PC-3 (cell line): ENCODE measurements at regions of chr10 and their contacts with region 1.

Region 1: GRCh38 chr10:50325449-50326171 is 74.3 kb upstream of the ASAH2 start:
- DNase-seq: peak; percentile 100
- ATAC-seq: peak; percentile 87
- H3K4me3 ChIP-seq: peak overlapping the region; percentile 36
- H3K27ac ChIP-seq: peak overlapping the region; percentile 69
- H3K4me1 ChIP-seq: peaks cover 42% of the 10 kb centered on the region
- H3K27me3 ChIP-seq: no peaks in the 10 kb centered on the region
- CTCF ChIP-seq: no peak

Region 2: DNA sequence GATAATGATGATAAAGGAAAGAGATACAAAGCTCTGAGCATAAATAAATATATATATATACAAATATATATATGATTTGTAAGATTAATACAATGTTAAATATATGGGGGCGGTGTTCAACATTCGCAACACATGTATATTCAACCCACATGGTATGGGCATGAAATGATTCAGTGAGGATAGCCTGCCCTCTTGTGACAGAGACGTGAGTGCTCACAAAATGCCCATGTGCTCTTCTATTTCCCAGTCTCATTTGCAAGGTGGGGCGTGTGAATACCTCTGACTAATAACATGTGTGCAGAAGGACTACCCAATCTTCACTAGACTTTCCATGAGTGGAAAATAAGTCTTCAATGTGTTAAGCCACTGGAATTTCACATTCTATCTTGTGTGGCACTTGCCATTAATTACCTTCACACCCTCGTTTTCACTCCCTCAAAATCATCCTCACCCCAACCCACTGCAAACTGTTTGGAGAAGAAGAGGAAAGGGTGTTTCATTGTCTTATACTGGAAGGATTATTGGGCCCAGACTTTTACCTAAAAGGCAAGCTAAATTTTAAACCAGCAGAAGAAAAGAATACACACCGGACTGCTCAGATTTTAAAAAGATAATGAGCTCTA is 101.2 kb before region 1 on chr10:
- CTCF ChIA-PET with region 1: no interaction called
- POLR2A ChIA-PET with region 1: no interaction called
- intact Hi-C with region 1: loop called (anchors 2 kb)
- DNase-seq: peak; percentile 99
- ATAC-seq: peak; percentile 99
- H3K4me3 ChIP-seq: no peak overlapping the region
- H3K27ac ChIP-seq: no peak overlapping the region
- H3K4me1 ChIP-seq: peaks cover 6% of the 10 kb centered on the region
- H3K27me3 ChIP-seq: peaks cover 8% of the 10 kb centered on the region; the same call in 1 of the 2 replicates
- CTCF ChIP-seq: peak; percentile 97

Region 3: DNA sequence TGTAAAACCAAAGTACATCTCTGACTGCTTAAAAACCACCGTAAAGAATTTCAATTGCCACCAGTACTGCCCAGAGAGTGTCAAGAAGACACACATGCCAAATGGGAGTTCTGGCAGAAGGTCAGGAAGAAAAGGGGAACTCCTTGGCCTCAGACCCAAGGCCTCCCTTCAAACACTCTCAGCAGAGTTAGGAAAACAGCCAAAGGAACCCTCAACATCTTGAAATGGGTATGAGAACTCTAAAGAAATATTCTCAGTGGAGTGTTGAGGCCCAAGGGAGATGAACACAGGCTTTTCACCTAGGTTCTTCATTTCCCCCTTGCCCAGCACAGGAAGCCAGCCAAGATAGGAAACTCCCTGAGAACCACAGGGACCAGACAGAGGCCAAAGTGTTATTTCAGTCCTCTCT is 21.8 kb after region 1 on chr10:
- CTCF ChIA-PET with region 1: no interaction called
- POLR2A ChIA-PET with region 1: no interaction called
- intact Hi-C with region 1: loop called (anchors 2 kb)
- DNase-seq: no peak
- ATAC-seq: no peak
- H3K4me3 ChIP-seq: no peak overlapping the region
- H3K27ac ChIP-seq: no peak overlapping the region
- H3K4me1 ChIP-seq: no peaks in the 10 kb centered on the region
- H3K27me3 ChIP-seq: no peaks in the 10 kb centered on the region
- CTCF ChIP-seq: no peak

Region 4: GRCh38 chr10:50403074-50403473 is 77.5 kb after region 1 on chr10:
- CTCF ChIA-PET with region 1: no interaction called
- POLR2A ChIA-PET with region 1: no interaction called
- intact Hi-C with region 1: loop called (anchors 1 kb)
- DNase-seq: peak; percentile 63
- ATAC-seq: peak; percentile 54
- H3K4me3 ChIP-seq: no peak overlapping the region
- H3K27ac ChIP-seq: peak overlapping the region; percentile 71
- H3K4me1 ChIP-seq: peaks cover 65% of the 10 kb centered on the region
- H3K27me3 ChIP-seq: no peaks in the 10 kb centered on the region
- CTCF ChIP-seq: no peak

Region 5: GRCh38 chr10:50501918-50502452 is 176.4 kb after region 1 on chr10:
- CTCF ChIA-PET with region 1: no interaction called
- POLR2A ChIA-PET with region 1: no interaction called
- intact Hi-C with region 1: loop called (anchors 1 kb)
- DNase-seq: peak; percentile 51
- ATAC-seq: peak; percentile 55
- H3K4me3 ChIP-seq: no peak overlapping the region
- H3K27ac ChIP-seq: peak overlapping the region; percentile 49
- H3K4me1 ChIP-seq: peaks cover 39% of the 10 kb centered on the region
- H3K27me3 ChIP-seq: no peaks in the 10 kb centered on the region
- CTCF ChIP-seq: no peak

Region 6: DNA sequence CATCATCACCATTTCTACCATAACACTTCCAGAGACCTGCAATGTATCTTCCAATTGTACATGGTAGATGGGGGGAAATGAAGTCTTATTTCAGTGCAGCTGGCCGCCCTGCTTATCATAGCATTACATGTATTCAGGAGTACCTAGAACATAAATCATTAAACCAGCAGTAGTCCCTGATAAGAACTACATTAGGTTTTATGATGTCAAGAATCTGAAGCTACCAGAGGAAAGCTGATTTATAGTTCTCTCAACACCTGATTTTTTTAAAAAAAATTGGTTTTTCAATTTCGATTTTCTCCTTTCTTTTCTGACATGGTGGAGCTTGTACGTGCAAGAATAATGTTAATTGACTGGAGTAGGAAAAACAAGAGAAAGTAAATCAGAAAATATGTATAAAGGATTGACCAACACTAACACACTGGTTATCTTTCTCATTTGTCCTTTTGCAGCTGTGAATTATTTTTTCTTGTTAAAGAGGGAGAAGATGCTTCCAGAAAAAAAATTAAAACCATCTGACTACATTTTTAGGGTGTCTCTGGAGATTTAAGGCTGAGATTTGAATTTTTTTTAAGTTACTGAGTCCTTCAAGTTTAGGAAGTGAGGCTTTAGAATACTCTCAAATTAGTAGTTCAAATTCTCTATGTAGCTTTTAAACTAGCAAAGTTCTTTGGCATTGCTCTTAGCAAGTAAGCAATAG is 1314.7 kb after region 1 on chr10:
- CTCF ChIA-PET with region 1: no interaction called
- POLR2A ChIA-PET with region 1: no interaction called
- intact Hi-C with region 1: no loop called
- DNase-seq: no peak
- ATAC-seq: no peak
- H3K4me3 ChIP-seq: no peak overlapping the region
- H3K27ac ChIP-seq: no peak overlapping the region
- H3K4me1 ChIP-seq: peaks cover 24% of the 10 kb centered on the region
- H3K27me3 ChIP-seq: no peaks in the 10 kb centered on the region
- CTCF ChIP-seq: no peak